A673 (cell line): ENCODE measurements at regions of chr9 and their contacts with region 1.

Region 1: GRCh38 chr9:132333556-132333955 is 21.2 kb downstream of the SETX start:
- DNase-seq: no peak
- H3K4me3 ChIP-seq: no peak overlapping the region
- H3K27ac ChIP-seq: no peak overlapping the region
- H3K4me1 ChIP-seq: no peaks in the 10 kb centered on the region
- H3K27me3 ChIP-seq: no peaks in the 10 kb centered on the region
- CTCF ChIP-seq: no peak

Region 2: DNA sequence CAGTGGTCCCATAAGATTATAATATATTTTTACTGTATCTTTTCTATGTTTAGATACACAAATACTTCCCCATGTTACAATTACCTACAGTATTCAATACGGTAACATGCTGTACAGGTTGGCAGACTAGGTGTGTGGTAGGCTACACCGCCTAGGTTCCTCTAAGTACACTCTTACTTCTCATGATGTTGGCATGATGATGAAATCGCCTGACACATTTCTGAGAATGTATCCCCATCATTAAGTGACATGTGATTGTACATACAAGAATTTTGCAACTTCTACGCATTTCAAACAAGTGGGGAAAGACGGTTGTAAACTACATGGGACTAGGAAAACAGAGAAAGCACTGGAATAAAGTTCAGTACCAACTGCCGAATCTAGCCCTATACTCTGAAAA is 32.0 kb before region 1 on chr9:
- CTCF ChIA-PET with region 1: no interaction called
- POLR2A ChIA-PET with region 1: interaction called, 12 read pairs
- intact Hi-C with region 1: no loop called
- DNase-seq: no peak
- H3K4me3 ChIP-seq: no peak overlapping the region
- H3K27ac ChIP-seq: peak overlapping the region; percentile 11
- H3K4me1 ChIP-seq: no peaks in the 10 kb centered on the region
- H3K27me3 ChIP-seq: no peaks in the 10 kb centered on the region
- CTCF ChIP-seq: no peak

Region 3: DNA sequence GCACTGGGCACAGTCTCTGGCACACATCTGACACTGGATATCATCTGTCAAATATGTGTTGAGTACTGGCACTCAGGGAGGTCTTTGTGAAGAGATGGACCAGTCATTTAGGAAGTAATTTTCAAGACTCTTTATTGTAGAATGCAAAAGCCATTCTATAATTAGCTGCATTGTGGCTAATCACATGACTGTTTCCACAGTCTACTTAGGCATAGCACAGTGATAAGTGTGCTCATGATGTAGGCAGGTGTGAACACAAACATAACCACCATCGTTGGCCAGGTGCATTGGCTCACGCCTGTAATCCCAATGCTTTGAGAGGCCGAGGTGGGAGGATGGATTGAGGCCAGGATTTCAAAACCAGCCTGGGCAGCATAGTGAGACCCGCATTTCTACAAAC is 138.6 kb after region 1 on chr9:
- CTCF ChIA-PET with region 1: no interaction called
- POLR2A ChIA-PET with region 1: no interaction called
- intact Hi-C with region 1: no loop called
- DNase-seq: no peak
- H3K4me3 ChIP-seq: no peak overlapping the region
- H3K27ac ChIP-seq: no peak overlapping the region
- H3K4me1 ChIP-seq: no peaks in the 10 kb centered on the region
- H3K27me3 ChIP-seq: peaks cover 49% of the 10 kb centered on the region
- CTCF ChIP-seq: no peak